Posterior cingulate gyrus (tissue), 11 donors: ENCODE measurements at regions of chr4 and their contacts with region 1.

Region 1: DNA sequence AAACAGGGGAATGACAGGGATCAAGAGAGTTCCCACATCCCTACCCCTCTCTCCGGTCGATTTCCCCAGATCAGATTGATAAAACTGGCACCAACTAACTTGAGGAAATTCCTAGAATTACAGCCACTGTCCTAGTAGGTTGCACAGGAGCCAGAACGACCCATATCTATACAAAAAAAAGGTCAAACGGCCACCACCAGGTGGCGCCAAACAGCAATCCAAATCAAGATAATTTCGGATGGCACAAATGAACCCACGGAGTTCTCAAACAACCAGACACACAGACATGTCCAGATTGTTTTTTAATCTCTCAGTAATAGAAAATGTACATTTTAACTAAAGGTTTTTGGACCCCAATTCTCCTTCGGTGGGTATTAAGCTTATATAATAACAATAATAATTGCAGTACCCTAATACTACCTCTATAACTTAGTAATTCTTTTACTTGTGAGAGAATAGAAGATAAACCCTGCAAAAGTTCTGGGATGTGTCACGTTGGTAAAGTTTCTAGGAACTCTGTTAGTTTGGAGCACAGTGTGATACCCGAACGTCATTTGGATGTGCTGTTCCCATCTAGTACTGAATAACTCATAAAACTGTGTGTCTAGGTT is 212.6 kb downstream of the SPOCK3 start:
- DNase-seq: peak; percentile 38 to 94 (median 80)

Region 2: GRCh38 chr4:167079762-167080161 is 58.1 kb after region 1 on chr4:
- intact Hi-C with region 1: no loop called
- DNase-seq: no peak

Region 3: DNA sequence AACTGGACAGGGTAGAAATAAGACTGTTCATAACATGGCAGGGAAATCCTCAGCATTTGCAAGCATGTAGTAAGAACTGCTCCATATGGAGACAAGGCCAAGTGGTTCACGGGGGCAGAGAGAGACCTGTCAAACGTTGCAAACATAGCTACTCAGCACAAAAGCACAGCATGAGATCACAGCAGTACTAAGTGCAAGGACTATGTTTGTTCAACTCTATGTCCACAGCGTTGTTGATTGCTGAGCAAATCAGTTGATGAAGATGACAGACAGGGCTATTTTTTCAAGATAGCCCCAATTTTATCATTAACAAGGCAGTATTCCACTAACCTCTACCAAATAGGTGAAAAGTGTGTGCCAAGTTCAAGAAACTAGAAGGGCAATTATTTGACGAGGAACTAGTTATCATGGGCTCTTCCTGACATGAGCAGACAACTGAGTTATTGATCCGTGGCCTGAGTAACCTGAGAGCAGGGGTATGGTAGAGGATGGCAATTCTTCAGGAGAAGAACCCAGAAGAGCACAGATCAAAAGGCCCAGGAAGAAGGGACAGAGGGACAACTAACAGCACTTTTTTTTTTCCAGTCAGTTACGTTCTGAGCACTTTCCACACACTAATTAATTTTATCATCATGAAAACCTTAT is 155.2 kb after region 1 on chr4:
- intact Hi-C with region 1: no loop called
- DNase-seq: no peak

Region 4: GRCh38 chr4:167234316-167234881 is 212.7 kb after region 1 on chr4 and contains the start of gene SPOCK3:
- intact Hi-C with region 1: loop called (anchors 1 kb)
- DNase-seq: peak; percentile 70 to 97 (median 82)

Region 5: DNA sequence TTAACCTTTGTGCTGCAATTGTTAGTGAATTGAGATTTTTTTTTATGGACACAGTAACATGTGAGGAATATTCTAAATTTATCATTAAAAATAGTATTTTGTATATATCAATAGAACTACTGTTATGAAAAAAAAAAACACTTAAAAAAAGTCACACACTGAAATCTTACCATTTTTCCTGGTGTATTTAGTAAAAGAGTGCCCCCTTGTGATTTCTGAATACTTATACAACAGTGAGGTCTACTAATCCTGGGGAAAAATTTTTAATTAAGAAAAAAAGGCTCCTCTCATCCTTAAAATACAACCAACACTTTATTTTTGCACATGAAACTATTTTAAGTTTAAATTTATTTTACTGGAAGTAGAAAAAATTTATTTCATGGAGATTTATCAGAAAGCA is 269.0 kb after region 1 on chr4:
- intact Hi-C with region 1: loop called (anchors 1 kb)
- DNase-seq: no peak